Pancreas (tissue), 10 donors: ENCODE measurements at regions of chr10 and their contacts with region 1.

Region 1: DNA sequence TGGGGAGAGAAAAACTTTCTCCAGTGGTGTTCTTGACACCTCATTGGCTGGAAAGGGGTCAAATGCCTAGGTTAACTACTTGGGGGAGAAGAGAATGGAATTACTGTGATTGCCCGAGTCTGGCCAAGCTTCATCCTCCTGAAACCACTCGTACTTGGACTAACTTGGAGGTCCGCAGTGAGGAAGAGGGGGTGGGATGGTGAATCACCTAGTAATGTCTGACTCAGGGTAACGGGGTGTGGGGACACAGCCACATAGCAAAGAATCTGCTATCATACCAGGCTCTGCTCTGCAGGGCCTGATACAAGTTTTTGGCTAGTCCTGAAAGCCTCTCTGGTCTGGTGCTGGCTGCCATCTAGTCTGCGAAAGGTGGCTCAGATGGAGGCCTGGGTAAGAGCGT is 190.9 kb downstream of the RPS24 start:
- DNase-seq: no peak
- ATAC-seq: no peak
- H3K4me3 ChIP-seq: no peak overlapping the region
- H3K27ac ChIP-seq: no peak overlapping the region
- H3K4me1 ChIP-seq: no peaks in the 10 kb centered on the region
- H3K27me3 ChIP-seq: no peaks in the 10 kb centered on the region
- CTCF ChIP-seq: no peak

Region 2: GRCh38 chr10:79202188-79203013 is 977.8 kb after region 1 on chr10:
- intact Hi-C with region 1: loop called in 1 of 3 experiments (anchors 10 kb)
- DNase-seq: peak in 1 of 6 donors; percentile 58
- ATAC-seq: peak in 3 of 4 donors; percentile 41 to 66 (median 55)
- H3K4me3 ChIP-seq: no peak overlapping the region
- H3K27ac ChIP-seq: no peak overlapping the region
- H3K4me1 ChIP-seq: no peaks in the 10 kb centered on the region
- H3K27me3 ChIP-seq: no peaks in the 10 kb centered on the region
- CTCF ChIP-seq: no peak